Activated T-helper 1 cell treated with anti-CD3 and anti-CD28 coated beads, Interleukin-12 subunit alpha, Interleukin-12 subunit beta, Interleukin-2, Interleukin-4 antibody, amounts not matched to agents 30 ng/mL and 10 ng/mL and 1 ng/mL, durations not matched to agents 14 hours and 24 hours and 36 hours (primary cell): ENCODE measurements at regions of chr13 and their contacts with region 1.

Region 1: DNA sequence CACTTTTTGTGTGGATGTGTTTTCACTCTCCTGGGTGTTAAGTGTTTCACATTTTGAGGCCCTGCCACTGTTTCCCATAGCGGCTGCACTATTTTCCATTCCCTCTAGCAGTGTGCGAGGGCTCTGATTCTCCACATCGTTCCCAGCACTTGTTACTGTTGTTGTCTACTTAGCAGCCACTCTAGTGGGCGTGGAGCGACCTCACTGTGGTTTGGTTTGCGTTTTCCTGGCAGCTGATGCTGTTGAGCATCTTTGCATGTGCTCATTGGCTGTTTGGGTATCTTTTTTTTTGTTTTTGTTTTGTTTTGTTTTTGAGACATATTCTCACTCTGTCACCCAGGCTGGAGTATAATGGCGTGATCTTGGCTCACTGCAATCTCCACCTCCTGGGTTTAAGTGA is 14.4 kb downstream of the NAXD start:
- DNase-seq: peak; percentile 51
- H3K4me3 Mint-ChIP-seq: peak overlapping the region; percentile 53
- H3K27ac Mint-ChIP-seq: peak overlapping the region; percentile 73
- H3K4me1 Mint-ChIP-seq: peaks cover 34% of the 10 kb centered on the region
- H3K27me3 Mint-ChIP-seq: no peaks in the 10 kb centered on the region

Region 2: DNA sequence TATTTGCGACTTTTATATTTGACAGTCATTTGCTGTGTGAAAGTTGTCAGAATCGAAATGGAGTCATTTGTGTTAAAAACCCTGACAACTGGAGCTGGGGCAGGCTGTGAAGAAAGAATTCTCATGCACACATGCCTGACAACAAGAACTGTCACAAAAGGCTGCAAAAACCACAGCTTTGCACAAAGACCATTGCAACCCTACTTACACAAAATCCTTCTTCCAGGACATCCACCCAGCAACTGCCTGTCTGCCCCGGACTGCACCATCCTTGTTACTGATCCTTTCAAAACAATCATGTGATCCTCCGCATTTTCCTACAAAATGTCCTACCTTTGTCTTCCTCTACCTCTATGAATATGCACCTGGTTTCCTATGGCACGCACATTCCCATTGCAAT is 776.6 kb before region 1 on chr13:
- intact Hi-C with region 1: no loop called
- DNase-seq: no peak
- H3K4me3 Mint-ChIP-seq: no peak overlapping the region
- H3K27ac Mint-ChIP-seq: no peak overlapping the region
- H3K4me1 Mint-ChIP-seq: no peaks in the 10 kb centered on the region
- H3K27me3 Mint-ChIP-seq: no peaks in the 10 kb centered on the region

Region 3: DNA sequence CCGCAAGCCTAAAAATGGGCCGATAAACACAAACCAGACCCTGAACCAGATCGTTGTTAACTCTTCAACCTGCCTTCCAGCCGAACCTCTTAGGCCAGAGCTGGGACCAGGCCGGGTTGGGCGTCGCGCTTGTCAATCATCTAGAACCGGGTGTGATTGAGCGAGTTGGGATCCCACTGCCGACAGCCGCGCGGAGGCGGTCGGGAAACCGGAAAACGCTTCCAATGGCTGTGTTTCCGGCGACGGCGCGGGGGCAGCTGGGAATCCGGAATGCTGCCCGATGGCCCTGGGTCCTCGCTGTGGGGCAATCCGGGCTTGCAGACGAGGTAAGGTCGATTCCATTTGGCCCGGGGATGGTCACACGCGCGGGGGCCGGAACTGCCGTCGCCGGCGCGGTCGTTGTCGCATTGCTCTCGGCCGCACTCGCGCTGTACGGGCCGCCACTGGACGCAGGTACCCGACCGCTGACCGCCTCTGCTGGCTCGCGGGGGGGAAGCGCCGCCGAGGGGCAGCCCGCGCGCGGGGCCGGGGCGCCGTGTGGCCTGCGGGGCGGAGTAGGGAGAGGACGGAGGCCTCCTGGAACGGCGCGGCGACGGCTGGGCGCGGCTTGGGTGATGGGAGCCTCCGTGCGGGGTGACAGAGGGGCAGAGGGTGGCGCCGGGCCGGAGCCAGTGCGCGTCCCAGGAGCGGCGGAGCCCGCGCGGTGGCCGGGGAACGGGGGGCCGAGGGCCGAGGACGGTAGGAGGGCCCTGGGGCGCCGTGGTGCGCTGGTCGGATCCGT is 14.2 kb before region 1 on chr13 and contains the start of gene NAXD:
- intact Hi-C with region 1: loop called (anchors 1 kb)
- DNase-seq: peak; percentile 80
- H3K4me3 Mint-ChIP-seq: peak within 1 kb of the TSS; percentile 96
- H3K27ac Mint-ChIP-seq: peak within 1 kb of the TSS; percentile 94
- H3K4me1 Mint-ChIP-seq: peaks cover 24% of the 10 kb centered on the region
- H3K27me3 Mint-ChIP-seq: peaks cover 4% of the 10 kb centered on the region
- total RNA-seq, gene NAXD: 22.0 and 22.2 TPM in 2 replicates